Colonic mucosa (tissue), 4 donors: ENCODE measurements at regions of chr2 and their contacts with region 1.

Region 1: DNA sequence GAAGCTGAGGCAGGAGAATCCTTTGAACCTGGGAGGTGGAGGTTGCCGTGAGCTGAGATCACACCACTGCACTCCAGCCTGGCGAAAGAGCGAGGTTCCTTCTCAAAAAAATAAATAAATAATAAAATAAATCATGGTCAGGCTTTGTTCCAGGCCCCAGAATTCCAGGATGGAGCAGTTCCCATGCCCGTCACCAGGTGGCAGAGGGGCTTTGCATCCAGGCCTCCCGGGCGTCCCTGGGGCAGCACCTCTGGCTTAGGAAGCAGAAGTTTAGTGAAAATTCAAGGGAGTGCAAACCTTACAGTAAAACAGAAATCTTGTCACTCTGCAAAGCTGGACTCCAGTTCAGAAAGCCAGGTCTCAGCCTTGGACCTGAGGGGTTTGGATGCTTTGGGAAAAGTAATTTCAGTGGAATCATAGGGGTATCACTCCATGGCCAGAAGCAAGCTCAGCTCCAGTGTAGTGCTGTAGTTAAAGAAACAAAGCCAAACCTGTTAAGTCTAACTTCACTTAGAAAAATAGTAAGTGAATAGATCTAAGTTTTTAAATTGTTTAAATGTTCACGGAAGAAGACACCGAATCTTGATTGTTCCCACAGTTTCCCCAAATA is 512.7 kb downstream of the CMPK2 start:
- DNase-seq: peak; percentile 72
- H3K4me3 ChIP-seq: no peak overlapping the region
- H3K27ac ChIP-seq: no peak overlapping the region
- H3K4me1 ChIP-seq: no peaks in the 10 kb centered on the region
- H3K27me3 ChIP-seq: no peaks in the 10 kb centered on the region
- CTCF ChIP-seq: peak; percentile 76

Region 2: GRCh38 chr2:6443061-6443823 is 90.2 kb after region 1 on chr2:
- intact Hi-C with region 1: no loop called
- DNase-seq: no peak
- H3K4me3 ChIP-seq: no peak overlapping the region
- H3K27ac ChIP-seq: no peak overlapping the region
- H3K4me1 ChIP-seq: no peaks in the 10 kb centered on the region
- H3K27me3 ChIP-seq: no peaks in the 10 kb centered on the region
- CTCF ChIP-seq: no peak

Region 3: GRCh38 chr2:6526093-6526824 is 173.2 kb after region 1 on chr2:
- intact Hi-C with region 1: loop called (anchors 2 kb)
- DNase-seq: no peak
- H3K4me3 ChIP-seq: no peak overlapping the region
- H3K27ac ChIP-seq: no peak overlapping the region
- H3K4me1 ChIP-seq: no peaks in the 10 kb centered on the region
- H3K27me3 ChIP-seq: no peaks in the 10 kb centered on the region
- CTCF ChIP-seq: peak; percentile 39

Region 4: DNA sequence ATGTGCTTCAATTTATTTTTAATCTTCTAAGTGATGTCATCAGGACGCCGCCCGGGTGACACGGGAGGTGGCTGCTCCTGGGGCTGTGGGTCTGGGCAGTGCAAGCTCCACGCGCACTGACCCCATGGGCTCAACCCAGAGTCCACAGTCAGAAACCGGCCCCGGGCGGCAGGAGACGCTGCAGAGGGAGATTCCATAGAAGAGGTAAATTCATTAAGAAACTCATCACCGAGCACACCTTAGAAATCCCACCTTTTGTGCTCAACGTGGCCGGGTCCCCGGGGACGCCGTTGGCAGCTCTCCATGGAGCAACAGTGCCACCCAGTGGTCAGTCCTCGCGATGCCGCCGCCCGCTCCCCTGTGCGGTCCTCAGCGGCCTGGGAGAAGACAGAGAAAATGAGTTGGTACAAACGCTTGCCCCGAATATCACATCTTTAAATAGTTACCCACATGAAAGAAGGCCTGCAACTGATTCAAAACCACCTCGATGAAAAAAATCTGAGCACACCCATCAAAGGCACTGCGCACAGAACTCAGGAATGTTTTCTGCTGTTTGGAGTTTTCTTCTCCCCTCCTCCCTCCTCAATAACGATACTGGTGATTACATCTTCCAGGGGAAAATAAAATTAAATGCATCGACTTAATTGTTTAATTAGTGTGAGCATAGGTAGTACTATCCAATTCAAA is 420.1 kb after region 1 on chr2:
- intact Hi-C with region 1: loop called (anchors 5 kb)
- DNase-seq: peak; percentile 49
- H3K4me3 ChIP-seq: no peak overlapping the region
- H3K27ac ChIP-seq: no peak overlapping the region
- H3K4me1 ChIP-seq: no peaks in the 10 kb centered on the region
- H3K27me3 ChIP-seq: peaks cover 5% of the 10 kb centered on the region
- CTCF ChIP-seq: peak; percentile 91